Activated CD8-positive, alpha-beta T cell treated with anti-CD3 and anti-CD28 coated beads for 36 hours (primary cell): ENCODE measurements at regions of chr19 and their contacts with region 1.

Region 1: DNA sequence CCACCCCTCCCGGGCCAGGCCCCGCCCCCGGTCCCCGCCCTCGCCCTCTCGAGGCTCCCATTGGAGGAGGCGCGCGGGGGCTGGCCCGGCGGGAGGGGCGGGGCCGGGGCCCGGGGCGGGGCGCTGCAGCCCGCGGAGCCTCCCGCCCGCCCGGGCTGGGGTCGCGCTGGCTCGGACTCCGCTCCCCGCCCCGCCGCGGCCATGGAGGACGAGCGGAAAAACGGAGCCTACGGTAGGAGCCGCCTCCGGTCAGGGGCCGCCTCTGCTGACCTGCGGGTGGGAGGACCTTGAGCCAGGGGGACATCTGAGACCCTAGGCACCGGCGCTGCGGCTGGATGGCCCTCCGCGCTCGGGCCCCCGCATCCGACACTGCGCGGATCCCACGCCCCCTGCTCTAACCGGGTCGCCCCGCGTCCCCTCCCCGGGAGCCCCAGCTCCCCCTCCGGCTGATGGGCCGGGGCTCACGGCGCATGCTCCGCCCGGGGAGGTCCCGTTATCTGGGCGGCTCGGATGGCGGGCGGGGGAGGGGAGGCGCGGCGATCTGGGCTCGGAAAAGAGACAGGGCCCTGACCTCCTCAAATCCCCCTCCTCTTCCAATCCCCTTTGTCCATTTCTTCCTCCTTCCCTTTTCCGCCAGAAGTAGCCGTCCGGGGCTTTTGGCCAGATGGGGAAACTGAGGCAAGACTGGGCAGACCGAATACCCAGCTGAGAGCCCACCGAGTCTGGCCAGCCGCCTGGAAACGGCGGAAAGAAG is 15.4 kb upstream of the AP1M2 start:
- DNase-seq: peak; percentile 93
- ATAC-seq: peak; percentile 86
- H3K4me3 Mint-ChIP-seq: peak overlapping the region; percentile 96
- H3K27ac Mint-ChIP-seq: peak overlapping the region; percentile 96
- H3K4me1 Mint-ChIP-seq: peaks cover 21% of the 10 kb centered on the region
- H3K27me3 Mint-ChIP-seq: no peaks in the 10 kb centered on the region
- CTCF ChIP-seq: no peak

Region 2: DNA sequence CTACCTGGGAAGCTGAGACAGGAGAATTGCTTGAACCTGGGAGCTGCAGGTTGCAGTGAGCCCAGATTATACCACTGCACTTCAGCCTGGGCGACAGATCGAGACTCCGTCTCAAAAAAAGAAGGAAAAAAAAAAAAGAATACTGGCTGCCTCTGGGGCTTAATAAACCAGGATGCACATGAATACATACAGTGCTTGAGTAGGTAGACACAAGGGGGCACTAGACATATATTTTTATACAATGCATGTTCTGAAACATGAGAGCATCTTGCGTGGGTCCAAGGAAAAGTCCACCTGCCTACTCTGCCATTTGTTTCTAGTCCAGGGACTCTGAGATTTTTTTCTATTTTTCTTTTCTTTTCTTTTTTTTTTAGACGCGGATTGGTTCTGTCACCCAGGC is 130.6 kb before region 1 on chr19:
- CTCF ChIA-PET with region 1: no interaction called
- POLR2A ChIA-PET with region 1: no interaction called
- intact Hi-C with region 1: no loop called
- DNase-seq: peak; percentile 19
- ATAC-seq: peak; percentile 63
- H3K4me3 Mint-ChIP-seq: no peak overlapping the region
- H3K27ac Mint-ChIP-seq: no peak overlapping the region
- H3K4me1 Mint-ChIP-seq: no peaks in the 10 kb centered on the region
- H3K27me3 Mint-ChIP-seq: no peaks in the 10 kb centered on the region
- CTCF ChIP-seq: peak; percentile 64

Region 3: DNA sequence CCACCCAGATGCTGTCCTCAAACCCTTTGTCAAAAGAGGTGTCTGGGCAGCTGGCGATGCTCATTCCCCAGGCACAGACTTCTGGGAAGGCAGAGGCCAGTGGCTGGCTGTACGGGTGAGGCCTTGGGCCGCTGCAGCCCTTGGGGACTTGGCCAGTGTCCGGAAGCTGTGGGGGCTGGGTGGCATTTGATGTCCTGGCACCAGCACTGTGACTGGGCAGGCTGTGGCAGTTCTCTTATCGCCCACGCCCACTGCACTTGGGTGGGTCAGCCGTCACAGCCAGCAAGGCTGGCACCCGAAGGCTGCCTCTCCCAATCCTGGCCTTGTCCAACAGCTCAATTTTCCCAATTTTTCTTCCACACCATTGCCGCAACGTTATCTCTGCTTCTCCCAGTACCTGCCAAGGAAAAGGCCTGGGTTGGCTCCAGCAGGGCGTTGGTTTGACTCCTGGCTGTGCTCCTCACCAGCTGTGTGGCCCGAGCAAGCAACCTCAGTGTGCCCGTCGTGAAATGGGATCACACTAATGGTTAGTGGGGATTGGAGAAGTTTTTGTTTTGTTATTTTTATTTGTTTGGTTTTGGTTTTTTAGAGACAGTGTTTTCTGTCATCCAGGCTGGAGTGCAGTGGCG is 10.1 kb after region 1 on chr19:
- CTCF ChIA-PET with region 1: no interaction called
- POLR2A ChIA-PET with region 1: interaction called, 13 read pairs
- intact Hi-C with region 1: no loop called
- DNase-seq: no peak
- ATAC-seq: no peak
- H3K4me3 Mint-ChIP-seq: no peak overlapping the region
- H3K27ac Mint-ChIP-seq: peak overlapping the region; percentile 5
- H3K4me1 Mint-ChIP-seq: peaks cover 28% of the 10 kb centered on the region
- H3K27me3 Mint-ChIP-seq: no peaks in the 10 kb centered on the region
- CTCF ChIP-seq: no peak

Region 4: DNA sequence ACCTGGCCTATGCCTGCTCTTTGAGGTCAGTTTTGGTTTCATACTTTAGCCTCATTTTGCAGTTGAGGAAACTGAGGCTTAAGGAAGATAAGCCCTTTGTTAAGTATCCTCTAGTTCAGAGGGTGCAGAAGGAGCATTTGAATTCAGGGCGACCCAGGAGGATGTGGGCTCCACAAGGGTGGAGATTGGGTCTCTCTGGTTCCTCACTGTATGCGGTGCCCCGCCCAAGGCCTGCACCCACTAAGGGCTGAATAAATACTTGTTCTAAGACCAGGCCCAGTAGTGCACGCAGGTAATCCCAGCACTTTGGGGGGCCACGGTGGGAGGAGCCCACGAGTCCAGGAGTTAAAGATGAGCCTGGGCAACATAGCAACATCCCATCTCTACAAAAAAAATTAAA is 22.1 kb after region 1 on chr19:
- CTCF ChIA-PET with region 1: interaction called, 4 read pairs
- POLR2A ChIA-PET with region 1: interaction called, 13 read pairs
- intact Hi-C with region 1: no loop called
- DNase-seq: no peak
- ATAC-seq: peak; percentile 37
- H3K4me3 Mint-ChIP-seq: no peak overlapping the region
- H3K27ac Mint-ChIP-seq: peak overlapping the region; percentile 46
- H3K4me1 Mint-ChIP-seq: peaks cover 38% of the 10 kb centered on the region
- H3K27me3 Mint-ChIP-seq: no peaks in the 10 kb centered on the region
- CTCF ChIP-seq: no peak